ENCODE measurements at regions of chr4 and their contacts with region 1.

Region 1: DNA sequence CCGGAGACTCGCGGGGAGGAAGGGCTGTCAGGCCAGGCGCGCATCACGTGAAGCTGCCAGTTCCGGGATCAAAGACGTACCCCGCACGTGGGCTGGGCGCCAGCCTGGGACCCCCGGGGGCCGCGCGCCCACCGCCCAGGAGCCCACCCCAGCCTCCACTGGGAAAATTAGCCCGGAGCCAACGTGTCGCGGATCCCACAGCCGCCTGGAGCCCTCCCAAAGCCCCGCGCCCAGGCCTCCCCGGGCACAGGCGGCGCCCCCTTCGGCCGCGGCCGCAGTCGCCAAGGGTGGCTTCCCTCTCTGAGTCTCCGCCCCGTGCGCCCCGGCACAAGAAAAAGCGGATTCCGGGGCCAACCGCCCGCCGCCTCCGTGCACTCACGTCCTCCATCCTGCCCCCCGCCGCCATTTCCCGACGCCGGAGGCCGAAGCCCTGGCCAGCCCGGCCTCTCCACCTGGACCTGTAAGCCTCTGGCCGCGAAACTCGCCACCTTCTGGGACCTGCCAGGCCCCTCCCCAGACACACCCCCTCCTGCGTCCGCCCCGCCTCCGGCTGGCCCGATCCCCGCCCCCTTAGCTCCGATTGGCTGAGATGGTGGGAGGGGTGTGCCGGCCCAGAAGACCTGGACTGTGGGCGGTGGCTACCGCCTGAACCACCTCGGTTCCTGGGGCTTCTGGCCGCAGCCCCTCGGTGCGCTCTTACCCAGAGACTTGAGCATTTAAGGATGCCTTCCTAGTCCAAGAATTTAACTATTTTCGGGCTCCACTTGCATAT is at the start of gene TMEM192:
- DNase-seq: peak; percentile 97
- H3K4me3 Mint-ChIP-seq: peak within 1 kb of the TSS; percentile 97
- H3K27ac Mint-ChIP-seq: peak within 1 kb of the TSS; percentile 94
- H3K4me1 Mint-ChIP-seq: peaks cover 13% of the 10 kb centered on the region
- H3K27me3 Mint-ChIP-seq: peaks cover 11% of the 10 kb centered on the region
- total RNA-seq, gene TMEM192: 10.0 and 11.0 TPM in 2 replicates

Region 2: GRCh38 chr4:163166041-163166579 is 1946.4 kb before region 1 on chr4:
- intact Hi-C with region 1: loop called (anchors 5 kb)
- DNase-seq: peak; percentile 87
- H3K4me3 Mint-ChIP-seq: peak overlapping the region; percentile 84
- H3K27ac Mint-ChIP-seq: peak overlapping the region; percentile 97
- H3K4me1 Mint-ChIP-seq: peaks cover 41% of the 10 kb centered on the region
- H3K27me3 Mint-ChIP-seq: no peaks in the 10 kb centered on the region

Region 3: DNA sequence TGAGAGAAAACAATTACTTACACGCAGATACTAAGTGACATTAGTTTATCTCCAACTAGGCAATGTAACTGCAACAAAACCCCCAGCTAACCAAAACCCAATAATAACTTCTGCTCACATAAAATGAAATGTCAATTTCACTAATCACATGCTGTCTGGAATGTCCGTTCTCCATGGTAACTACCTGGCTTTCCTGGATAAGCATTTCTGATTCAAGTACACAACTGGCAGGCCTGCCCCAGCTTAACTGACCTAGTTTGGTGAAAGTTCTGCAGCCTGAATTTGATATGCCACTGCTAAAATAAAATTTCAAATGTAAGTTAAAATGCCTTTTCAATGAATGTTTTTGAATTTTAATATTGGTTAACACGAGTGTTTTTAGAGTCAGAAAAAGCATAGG is 1304.5 kb before region 1 on chr4:
- intact Hi-C with region 1: no loop called
- DNase-seq: no peak
- H3K4me3 Mint-ChIP-seq: no peak overlapping the region
- H3K27ac Mint-ChIP-seq: no peak overlapping the region
- H3K4me1 Mint-ChIP-seq: no peaks in the 10 kb centered on the region
- H3K27me3 Mint-ChIP-seq: no peaks in the 10 kb centered on the region

Region 4: DNA sequence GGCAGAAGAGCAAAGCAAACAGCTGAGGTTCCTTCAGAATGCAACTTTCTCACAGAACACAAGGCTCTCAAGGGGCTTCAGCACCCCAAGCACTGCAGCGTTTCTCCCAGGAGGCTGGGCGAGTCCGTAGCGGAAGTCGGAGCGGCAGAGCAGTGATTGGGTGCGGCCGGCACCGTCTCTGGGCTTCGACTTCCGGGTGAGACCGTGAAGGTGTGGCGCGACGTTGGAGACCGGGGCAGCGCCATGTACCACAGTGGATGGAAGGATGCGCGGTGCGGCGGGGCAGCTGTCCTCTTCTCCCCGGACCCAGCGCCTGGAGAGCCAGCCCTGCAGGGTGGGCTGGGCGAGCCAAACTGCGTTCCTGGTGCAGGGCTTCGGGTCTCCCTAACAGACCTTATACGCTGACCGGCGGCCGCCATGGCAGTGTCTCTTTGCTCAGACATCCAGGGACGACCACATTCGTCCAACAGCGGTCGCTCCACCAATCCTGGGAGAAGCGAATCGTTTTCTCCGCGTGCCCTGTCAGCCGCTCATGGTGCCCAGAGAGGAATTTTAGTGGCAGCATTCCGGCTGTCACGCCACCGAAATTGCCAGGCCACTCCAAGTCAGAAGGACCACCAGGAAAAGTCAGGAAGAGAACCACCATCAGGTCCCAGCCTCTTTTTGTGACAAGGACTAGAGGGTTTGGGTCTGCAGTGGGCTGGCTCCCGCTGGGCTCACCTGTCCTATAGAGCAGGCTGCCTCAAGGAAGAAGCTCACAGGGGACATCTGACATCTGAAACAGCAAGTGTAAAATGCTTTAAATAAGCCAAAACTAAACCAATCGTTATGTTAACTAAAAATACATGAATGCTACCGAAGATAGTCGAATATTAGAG is 155.5 kb before region 1 on chr4:
- intact Hi-C with region 1: loop called (anchors 5 kb)
- DNase-seq: peak; percentile 95
- H3K4me3 Mint-ChIP-seq: peak overlapping the region; percentile 94
- H3K27ac Mint-ChIP-seq: peak overlapping the region; percentile 77
- H3K4me1 Mint-ChIP-seq: peaks cover 14% of the 10 kb centered on the region
- H3K27me3 Mint-ChIP-seq: peaks cover 4% of the 10 kb centered on the region

Region 5: DNA sequence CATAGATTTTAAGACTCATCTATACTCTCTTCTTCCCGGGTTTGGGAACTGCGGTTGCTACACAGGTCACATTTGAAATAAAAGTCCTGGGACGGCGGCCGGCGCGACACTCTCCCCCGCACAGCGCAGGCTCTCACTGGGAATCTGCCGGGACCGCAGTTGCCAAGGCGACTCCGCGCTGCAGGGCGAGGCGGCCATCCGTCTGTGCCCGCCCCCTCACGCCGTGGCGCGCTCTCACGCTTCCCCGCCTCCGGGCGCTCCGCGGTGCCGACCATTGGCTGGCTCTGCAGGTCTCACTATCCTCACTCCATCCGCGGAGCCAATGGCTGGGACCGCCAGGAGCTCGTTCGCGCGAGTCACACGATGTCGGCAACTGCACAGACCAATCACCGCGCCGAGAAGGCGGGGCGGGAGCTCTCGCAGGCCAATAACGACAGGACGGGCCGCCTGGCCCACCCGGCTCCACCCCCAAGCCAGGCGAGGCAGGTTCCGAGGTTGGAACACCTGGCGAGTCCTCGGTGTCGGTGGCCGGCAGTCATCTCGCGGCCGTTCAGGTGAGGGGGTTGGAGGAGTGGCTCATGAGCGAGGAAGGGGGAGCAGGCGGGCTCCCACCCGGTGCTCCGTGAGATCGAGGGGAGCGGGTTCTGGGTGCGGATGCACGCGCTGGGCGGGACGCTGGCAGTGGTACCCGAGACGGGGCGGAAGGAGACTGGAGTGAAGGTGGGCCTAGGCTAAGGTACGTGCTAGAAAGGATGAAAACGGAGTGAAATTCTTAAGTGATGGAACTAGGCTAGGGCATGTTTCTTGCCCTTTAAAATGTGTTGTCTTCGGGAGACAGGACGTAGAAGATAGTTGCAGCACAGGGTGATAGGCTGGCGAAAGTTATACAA is 214.9 kb after region 1 on chr4 and contains the start of gene MSMO1:
- intact Hi-C with region 1: loop called (anchors 1 kb)
- DNase-seq: peak; percentile 100
- H3K4me3 Mint-ChIP-seq: no peak within 1 kb of the TSS
- H3K27ac Mint-ChIP-seq: peak within 1 kb of the TSS; percentile 73
- H3K4me1 Mint-ChIP-seq: peaks cover 38% of the 10 kb centered on the region
- H3K27me3 Mint-ChIP-seq: no peaks in the 10 kb centered on the region
- total RNA-seq, gene MSMO1: 82.0 and 82.3 TPM in 2 replicates

Region 6: GRCh38 chr4:165464813-165465381 is 352.3 kb after region 1 on chr4:
- intact Hi-C with region 1: loop called (anchors 1 kb)
- DNase-seq: peak; percentile 65
- H3K4me3 Mint-ChIP-seq: no peak overlapping the region
- H3K27ac Mint-ChIP-seq: no peak overlapping the region
- H3K4me1 Mint-ChIP-seq: no peaks in the 10 kb centered on the region
- H3K27me3 Mint-ChIP-seq: peaks cover 7% of the 10 kb centered on the region